ENCODE measurements at regions of chr12 and their contacts with region 1.

Region 1: DNA sequence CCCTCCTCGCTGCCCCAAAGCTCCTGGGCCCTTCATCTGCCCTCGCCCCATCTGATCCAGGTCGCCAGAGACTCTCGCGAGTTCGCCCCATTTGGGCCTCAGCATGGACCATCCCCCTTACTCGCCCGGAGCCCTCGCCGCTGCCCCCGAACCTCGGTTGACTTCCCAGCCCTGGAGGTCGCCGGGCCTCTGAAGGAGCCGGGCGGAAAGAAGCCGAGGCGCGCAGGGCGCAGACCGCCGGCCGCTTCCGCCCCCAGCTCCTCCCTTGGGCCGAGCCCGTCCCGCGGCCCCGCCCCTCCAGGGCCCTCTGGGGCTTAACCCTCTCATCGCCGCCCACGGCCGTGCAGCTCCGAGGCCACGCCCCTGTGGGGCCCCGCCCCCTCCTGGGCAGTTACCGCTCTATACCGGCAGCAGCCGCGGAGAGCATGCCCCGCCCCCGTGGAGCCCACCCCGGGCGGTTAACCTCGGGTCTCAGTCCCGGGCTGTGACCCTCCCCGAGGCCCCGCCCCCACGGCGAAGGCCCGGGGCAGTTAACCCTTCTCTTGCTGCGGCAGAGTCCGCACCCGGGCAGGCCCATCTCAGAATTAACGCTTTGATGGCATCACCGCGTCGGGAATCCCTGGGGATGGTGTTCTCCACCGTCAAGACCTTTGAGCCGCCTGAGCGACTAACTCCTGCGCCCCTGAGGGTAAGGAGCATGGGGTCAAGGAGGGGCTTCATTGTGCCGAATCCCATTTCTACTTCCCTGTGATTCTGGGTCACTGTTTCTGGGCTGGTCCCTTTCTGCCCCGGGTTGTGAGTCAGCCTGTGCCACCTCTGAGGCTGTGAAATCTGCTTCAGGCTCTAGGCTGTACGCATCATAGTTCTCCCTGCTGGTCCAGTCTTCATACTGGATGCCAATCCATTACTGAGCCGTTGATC is at the start of gene SPSB2:
- DNase-seq: peak; percentile 99
- ATAC-seq: peak; percentile 78
- H3K4me3 Mint-ChIP-seq: peak within 1 kb of the TSS; percentile 94
- H3K27ac Mint-ChIP-seq: peak within 1 kb of the TSS; percentile 96
- H3K4me1 Mint-ChIP-seq: peaks cover 56% of the 10 kb centered on the region
- H3K27me3 Mint-ChIP-seq: no peaks in the 10 kb centered on the region
- total RNA-seq, gene SPSB2: 10.0 to 11.2 TPM

Region 2: DNA sequence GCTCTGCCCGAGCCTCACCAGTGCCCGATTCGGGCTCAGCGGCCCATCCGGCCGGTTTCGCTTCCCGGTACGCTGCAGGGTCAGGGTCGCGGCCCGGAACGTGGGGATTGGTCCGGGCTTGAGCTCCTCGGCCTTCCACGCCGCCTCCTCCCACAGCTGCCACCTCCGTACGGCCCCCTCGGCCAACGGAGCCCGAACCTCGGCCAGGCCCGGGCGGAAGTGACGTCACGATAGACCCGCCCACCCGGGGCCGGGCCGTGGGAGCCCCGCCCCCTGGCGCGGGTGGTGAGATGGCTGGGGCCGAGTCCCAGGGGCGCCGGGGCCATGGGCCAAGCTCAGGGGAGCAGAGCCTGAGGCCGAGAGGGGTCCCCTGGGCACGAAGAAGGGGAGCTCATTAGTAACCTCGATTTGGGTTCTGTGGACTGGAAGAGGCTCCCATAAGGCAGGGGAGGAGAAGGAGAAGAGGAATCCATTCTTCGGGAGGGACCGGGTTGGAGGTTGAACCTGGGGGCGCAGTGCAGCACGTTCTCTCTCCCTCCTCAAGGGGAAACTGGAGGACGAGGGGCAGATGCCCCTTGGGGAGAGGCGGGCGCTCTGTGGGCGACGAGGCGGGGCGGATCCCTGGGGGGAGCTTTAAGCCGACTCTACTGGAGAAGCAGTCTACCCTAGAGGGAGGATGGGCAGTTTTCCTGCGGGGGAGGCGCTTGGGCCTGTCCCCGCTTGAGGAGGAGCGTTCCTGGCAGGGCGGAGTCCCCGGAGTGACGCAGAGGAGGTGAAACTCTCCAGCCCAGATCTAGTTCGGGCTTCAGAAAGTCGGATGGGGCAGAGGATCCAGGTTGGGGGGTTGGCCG is 120.2 kb before region 1 on chr12 and contains the start of gene MLF2:
- CTCF ChIA-PET with region 1: interaction called, 11 read pairs
- POLR2A ChIA-PET with region 1: interaction called, 7 read pairs
- DNase-seq: peak; percentile 99
- ATAC-seq: peak; percentile 96
- H3K4me3 Mint-ChIP-seq: peak within 1 kb of the TSS; percentile 91
- H3K27ac Mint-ChIP-seq: peak within 1 kb of the TSS; percentile 99
- H3K4me1 Mint-ChIP-seq: peaks cover 29% of the 10 kb centered on the region
- H3K27me3 Mint-ChIP-seq: peaks cover 4% of the 10 kb centered on the region
- total RNA-seq, gene MLF2: 109 to 113 TPM

Region 3: DNA sequence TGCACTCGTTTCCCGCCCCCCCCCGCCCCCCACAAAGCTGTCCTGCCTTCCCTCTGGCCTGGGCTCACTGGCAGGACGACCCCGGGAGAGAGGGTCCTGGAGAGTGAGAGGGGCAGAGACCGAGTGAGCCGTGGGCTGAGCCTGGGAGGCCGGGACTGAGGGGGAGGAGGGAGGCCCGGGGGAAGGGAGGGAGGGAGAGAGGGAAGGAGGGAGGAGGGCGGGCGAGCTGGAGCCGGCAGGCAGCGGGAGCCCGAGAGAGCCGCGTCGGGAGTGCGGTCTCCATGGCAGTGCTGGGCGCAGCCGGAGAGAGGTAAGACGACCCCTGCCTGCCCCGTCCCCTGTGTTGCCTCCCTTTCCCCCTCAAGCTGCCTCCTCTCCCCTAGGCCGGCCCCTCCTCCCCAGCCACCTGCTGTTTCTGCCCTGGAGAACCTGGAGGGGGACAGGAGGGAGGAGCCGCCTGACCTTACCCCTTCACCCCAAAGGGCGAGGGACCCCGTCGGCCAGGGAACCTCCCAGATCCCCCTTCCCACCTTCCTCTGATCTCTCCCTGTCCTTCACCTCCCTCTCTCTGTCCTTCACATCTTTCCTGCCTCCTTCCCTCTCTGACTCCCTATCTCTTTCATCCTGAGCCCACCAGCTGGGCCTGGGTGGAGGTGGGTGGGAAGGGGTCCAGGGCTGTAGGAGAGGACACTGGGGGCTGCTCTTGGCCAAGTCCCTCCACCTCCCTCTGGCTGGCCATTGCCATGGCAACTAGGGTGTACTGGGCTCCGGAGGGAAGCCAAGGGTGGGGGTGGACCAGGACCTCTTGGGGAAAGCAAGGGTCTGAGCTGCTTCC is 51.5 kb before region 1 on chr12 and contains the start of gene GPR162:
- CTCF ChIA-PET with region 1: no interaction called
- POLR2A ChIA-PET with region 1: no interaction called
- DNase-seq: no peak
- ATAC-seq: peak; percentile 12
- H3K4me3 Mint-ChIP-seq: peak within 1 kb of the TSS; percentile 17
- H3K27ac Mint-ChIP-seq: peak within 1 kb of the TSS; percentile 51
- H3K4me1 Mint-ChIP-seq: peaks cover 22% of the 10 kb centered on the region
- H3K27me3 Mint-ChIP-seq: peaks cover 54% of the 10 kb centered on the region
- total RNA-seq, gene GPR162: 0.13 to 0.34 TPM

Region 4: DNA sequence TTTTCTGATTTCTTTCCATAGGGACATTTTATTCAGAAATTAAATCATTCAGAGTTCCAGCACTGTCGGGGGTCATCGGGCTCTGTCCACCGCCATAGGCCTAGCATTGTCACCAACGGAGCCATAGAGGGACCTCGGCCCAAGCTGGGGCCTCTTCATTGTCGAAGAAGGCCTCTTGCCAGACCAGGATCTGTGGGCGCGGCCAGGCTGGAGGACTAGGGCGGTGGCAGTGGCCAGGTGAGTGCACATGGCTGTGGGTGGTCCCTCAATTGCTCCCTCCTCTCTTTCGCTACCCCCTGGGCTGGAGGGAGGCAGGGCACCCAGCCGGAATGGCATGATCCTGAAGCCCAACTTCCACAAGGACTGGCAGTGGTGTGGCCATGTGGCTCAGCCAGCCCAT is 10.3 kb after region 1 on chr12:
- CTCF ChIA-PET with region 1: interaction called, 23 read pairs
- POLR2A ChIA-PET with region 1: interaction called, 17 read pairs
- DNase-seq: no peak
- ATAC-seq: no peak
- H3K4me3 Mint-ChIP-seq: no peak overlapping the region
- H3K27ac Mint-ChIP-seq: no peak overlapping the region
- H3K4me1 Mint-ChIP-seq: peaks cover 3% of the 10 kb centered on the region
- H3K27me3 Mint-ChIP-seq: no peaks in the 10 kb centered on the region

Region 5: GRCh38 chr12:6914246-6914946 is 41.0 kb after region 1 on chr12 and contains the start of gene ENO2:
- CTCF ChIA-PET with region 1: interaction called, 22 read pairs
- POLR2A ChIA-PET with region 1: interaction called, 6 read pairs
- DNase-seq: peak; percentile 87
- ATAC-seq: peak; percentile 92
- H3K4me3 Mint-ChIP-seq: peak within 1 kb of the TSS; percentile 92
- H3K27ac Mint-ChIP-seq: peak within 1 kb of the TSS; percentile 84
- H3K4me1 Mint-ChIP-seq: peaks cover 45% of the 10 kb centered on the region
- H3K27me3 Mint-ChIP-seq: peaks cover 5% of the 10 kb centered on the region
- total RNA-seq, gene ENO2: 133 to 141 TPM

Region 6: DNA sequence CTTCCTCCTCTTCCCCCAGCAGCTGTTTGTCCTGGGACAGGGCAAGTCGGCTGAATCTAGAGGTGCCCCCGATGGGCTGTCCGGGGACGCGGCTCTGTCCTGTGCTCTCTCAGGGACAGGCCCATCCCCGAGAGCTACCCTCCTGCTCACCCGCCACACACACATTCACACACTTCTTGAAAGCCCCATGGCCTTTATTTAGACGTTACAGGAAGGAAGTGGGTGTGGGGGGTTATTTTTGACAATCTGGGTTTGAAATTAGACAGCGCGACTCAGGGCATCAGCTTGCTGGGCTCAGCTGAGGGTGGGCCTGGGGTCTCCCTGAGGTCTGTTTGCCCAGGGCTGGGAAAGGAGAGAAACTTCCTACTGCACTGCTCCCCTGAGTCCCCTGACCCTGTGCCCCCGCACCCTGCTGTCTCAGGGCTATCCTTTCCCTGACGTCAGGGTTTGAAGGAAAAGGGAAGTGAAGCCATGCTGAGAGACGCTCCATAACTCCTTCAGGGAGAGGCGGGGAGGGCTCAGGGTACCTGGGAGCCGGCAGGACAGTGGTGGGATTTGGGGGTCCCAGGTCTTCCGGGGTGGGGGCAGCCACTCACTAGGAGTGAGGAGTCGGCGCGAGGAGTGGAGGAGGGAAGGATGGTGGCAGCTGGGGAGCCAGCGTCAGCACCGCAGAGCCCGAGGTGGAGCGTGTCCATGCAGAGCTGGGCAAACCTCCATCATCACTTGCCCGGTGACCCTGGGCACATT is 85.9 kb after region 1 on chr12:
- CTCF ChIA-PET with region 1: interaction called, 16 read pairs
- POLR2A ChIA-PET with region 1: interaction called, 8 read pairs
- DNase-seq: peak; percentile 84
- ATAC-seq: peak; percentile 60
- H3K4me3 Mint-ChIP-seq: peak overlapping the region; percentile 99
- H3K27ac Mint-ChIP-seq: peak overlapping the region; percentile 98
- H3K4me1 Mint-ChIP-seq: peaks cover 89% of the 10 kb centered on the region
- H3K27me3 Mint-ChIP-seq: no peaks in the 10 kb centered on the region